Upper lobe of right lung (tissue), 1 donor: ENCODE measurements at regions of chr1 and their contacts with region 1.

Region 1: GRCh38 chr1:157992031-157992832 is 1.2 kb upstream of the KIRREL1 start:
- DNase-seq: peak; percentile 72
- ATAC-seq: peak; percentile 80
- H3K4me3 ChIP-seq: no peak overlapping the region
- H3K27ac ChIP-seq: peak overlapping the region; percentile 31
- H3K4me1 ChIP-seq: peaks cover 11% of the 10 kb centered on the region
- H3K27me3 ChIP-seq: peaks cover 11% of the 10 kb centered on the region
- CTCF ChIP-seq: peak; percentile 91

Region 2: DNA sequence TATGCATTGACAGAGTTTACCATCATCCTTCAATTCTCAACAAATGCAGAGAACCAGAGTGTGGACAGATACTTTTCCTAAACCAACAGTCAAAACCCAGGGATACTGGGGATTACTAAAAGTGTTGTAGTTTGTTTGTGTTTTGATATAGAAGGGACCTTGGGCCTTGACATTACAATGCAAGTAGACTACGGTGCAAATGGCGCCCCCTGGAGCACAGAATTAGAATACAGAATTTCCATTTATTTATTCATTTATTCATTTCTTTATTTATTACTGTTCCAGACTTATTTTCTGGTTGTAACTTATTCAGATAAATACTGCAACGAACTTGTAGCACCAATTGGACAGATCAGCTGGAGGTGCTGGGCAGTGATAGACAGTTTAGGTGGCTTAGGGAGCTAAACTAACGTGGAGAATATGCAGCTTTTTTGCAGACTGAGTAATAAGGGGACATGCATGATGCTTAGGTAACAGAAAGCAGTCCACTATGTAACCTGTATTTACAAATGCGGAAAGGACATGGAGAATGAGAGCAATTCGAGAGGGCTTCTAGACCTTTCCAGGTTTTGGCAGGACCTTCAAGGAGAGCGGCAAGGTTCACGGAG is 43.8 kb after region 1 on chr1:
- intact Hi-C with region 1: loop called (anchors 5 kb)
- DNase-seq: no peak
- ATAC-seq: peak; percentile 57
- H3K4me3 ChIP-seq: no peak overlapping the region
- H3K27ac ChIP-seq: no peak overlapping the region
- H3K4me1 ChIP-seq: peaks cover 23% of the 10 kb centered on the region
- H3K27me3 ChIP-seq: no peaks in the 10 kb centered on the region
- CTCF ChIP-seq: peak; percentile 72

Region 3: GRCh38 chr1:158087320-158087927 is 95.2 kb after region 1 on chr1:
- intact Hi-C with region 1: loop called (anchors 5 kb)
- DNase-seq: no peak
- ATAC-seq: peak; percentile 81
- H3K4me3 ChIP-seq: no peak overlapping the region
- H3K27ac ChIP-seq: no peak overlapping the region
- H3K4me1 ChIP-seq: no peaks in the 10 kb centered on the region
- H3K27me3 ChIP-seq: no peaks in the 10 kb centered on the region
- CTCF ChIP-seq: peak; percentile 87

Region 4: GRCh38 chr1:158203693-158204457 is 211.6 kb after region 1 on chr1:
- intact Hi-C with region 1: no loop called
- DNase-seq: no peak
- ATAC-seq: peak; percentile 80
- H3K4me3 ChIP-seq: no peak overlapping the region
- H3K27ac ChIP-seq: no peak overlapping the region
- H3K4me1 ChIP-seq: peaks cover 9% of the 10 kb centered on the region
- H3K27me3 ChIP-seq: peaks cover 7% of the 10 kb centered on the region
- CTCF ChIP-seq: peak; percentile 85